ENCODE measurements at regions of chr6 and their contacts with region 1.

Region 1: DNA sequence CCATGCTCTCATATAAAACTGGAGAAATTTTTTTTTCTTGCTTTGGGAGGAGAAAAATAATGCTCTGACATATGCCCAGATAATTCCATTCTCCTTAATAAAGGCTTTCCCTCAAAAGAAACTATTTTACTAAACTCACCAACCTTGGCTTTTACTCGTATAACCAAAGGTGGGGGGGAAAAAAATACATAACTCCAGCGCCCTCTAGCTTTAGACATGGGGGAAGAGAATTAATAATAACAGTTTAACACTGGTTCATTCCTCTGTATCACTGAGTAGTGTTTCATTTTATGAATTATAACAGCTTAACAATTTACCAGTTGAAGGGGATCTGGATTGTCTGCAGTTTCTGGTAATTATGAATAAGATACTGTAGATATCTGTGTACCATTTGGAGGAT is 1226.1 kb downstream of the GRIK2 start:
- DNase-seq: peak; percentile 65
- H3K4me3 ChIP-seq: no peak overlapping the region
- H3K27ac ChIP-seq: no peak overlapping the region
- H3K4me1 ChIP-seq: peaks cover 8% of the 10 kb centered on the region
- H3K27me3 ChIP-seq: no peaks in the 10 kb centered on the region
- CTCF ChIP-seq: peak; percentile 82

Region 2: DNA sequence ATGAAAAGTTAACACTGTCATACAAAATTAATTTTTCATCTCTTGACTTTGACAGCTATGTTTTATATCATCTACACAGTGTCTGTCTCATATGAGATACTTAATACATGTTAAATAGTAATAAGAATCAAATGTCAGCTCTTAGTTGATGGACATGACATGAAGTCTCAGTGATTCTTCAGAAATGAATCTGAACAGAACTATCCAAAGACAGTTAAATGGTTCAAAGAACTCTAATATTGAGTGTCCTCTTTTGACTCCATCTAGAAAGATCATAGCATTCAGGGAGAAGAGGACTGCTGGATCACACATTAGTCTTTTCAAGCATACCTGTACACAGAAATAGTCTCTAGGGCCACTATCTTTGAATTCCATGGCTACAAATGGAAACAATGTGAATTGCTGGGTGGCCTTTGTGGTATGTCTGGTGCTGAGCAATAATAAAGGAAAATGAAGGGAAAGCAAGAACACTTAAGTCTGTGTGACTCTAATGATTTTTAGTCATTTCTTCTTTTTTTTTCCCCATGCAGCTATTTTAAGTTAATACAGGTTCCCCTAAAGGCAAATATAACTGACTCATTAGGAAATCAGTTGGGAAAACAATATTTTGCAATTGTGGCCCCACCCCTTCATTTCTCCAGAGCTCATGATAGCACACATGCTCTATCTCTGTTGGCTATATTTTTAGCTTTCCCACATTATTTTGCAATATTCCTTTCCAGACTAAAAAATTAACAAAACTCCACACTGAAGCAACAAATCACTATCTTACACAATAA is 858.6 kb before region 1 on chr6:
- CTCF ChIA-PET with region 1: no interaction called
- POLR2A ChIA-PET with region 1: no interaction called
- intact Hi-C with region 1: no loop called
- DNase-seq: no peak
- H3K4me3 ChIP-seq: no peak overlapping the region
- H3K27ac ChIP-seq: no peak overlapping the region
- H3K4me1 ChIP-seq: peaks cover 17% of the 10 kb centered on the region
- H3K27me3 ChIP-seq: no peaks in the 10 kb centered on the region
- CTCF ChIP-seq: no peak

Region 3: GRCh38 chr6:102114402-102114801 is 505.2 kb before region 1 on chr6:
- CTCF ChIA-PET with region 1: no interaction called
- POLR2A ChIA-PET with region 1: no interaction called
- intact Hi-C with region 1: loop called (anchors 10 kb)
- DNase-seq: peak; percentile 48
- H3K4me3 ChIP-seq: no peak overlapping the region
- H3K27ac ChIP-seq: no peak overlapping the region
- H3K4me1 ChIP-seq: no peaks in the 10 kb centered on the region
- H3K27me3 ChIP-seq: no peaks in the 10 kb centered on the region
- CTCF ChIP-seq: peak; percentile 65

Region 4: GRCh38 chr6:102832021-102832420 is 212.4 kb after region 1 on chr6:
- CTCF ChIA-PET with region 1: no interaction called
- POLR2A ChIA-PET with region 1: no interaction called
- intact Hi-C with region 1: no loop called
- DNase-seq: no peak
- H3K4me3 ChIP-seq: no peak overlapping the region
- H3K27ac ChIP-seq: no peak overlapping the region
- H3K4me1 ChIP-seq: no peaks in the 10 kb centered on the region
- H3K27me3 ChIP-seq: no peaks in the 10 kb centered on the region
- CTCF ChIP-seq: no peak

Region 5: GRCh38 chr6:102928109-102928508 is 308.5 kb after region 1 on chr6:
- CTCF ChIA-PET with region 1: no interaction called
- POLR2A ChIA-PET with region 1: no interaction called
- intact Hi-C with region 1: no loop called
- DNase-seq: no peak
- H3K4me3 ChIP-seq: no peak overlapping the region
- H3K27ac ChIP-seq: no peak overlapping the region
- H3K4me1 ChIP-seq: no peaks in the 10 kb centered on the region
- H3K27me3 ChIP-seq: no peaks in the 10 kb centered on the region
- CTCF ChIP-seq: no peak

Measured in A673 (cell line).